Heart right ventricle (tissue), 16 donors: ENCODE measurements at regions of chr6 and their contacts with region 1.

Region 1: GRCh38 chr6:4606821-4607704 is 169.1 kb upstream of the CDYL start:
- DNase-seq: peak in 1 of 2 donors; percentile 29
- ATAC-seq: peak in 3 of 8 donors; percentile 12 to 59 (median 22)
- H3K4me3 ChIP-seq: no peak overlapping the region
- H3K27ac ChIP-seq: no peak overlapping the region
- H3K4me1 ChIP-seq: peaks cover 0 to 42% (median 23%) of the 10 kb centered on the region in 9 donors
- H3K27me3 ChIP-seq: no peaks in the 10 kb centered on the region
- CTCF ChIP-seq: no peak

Region 2: DNA sequence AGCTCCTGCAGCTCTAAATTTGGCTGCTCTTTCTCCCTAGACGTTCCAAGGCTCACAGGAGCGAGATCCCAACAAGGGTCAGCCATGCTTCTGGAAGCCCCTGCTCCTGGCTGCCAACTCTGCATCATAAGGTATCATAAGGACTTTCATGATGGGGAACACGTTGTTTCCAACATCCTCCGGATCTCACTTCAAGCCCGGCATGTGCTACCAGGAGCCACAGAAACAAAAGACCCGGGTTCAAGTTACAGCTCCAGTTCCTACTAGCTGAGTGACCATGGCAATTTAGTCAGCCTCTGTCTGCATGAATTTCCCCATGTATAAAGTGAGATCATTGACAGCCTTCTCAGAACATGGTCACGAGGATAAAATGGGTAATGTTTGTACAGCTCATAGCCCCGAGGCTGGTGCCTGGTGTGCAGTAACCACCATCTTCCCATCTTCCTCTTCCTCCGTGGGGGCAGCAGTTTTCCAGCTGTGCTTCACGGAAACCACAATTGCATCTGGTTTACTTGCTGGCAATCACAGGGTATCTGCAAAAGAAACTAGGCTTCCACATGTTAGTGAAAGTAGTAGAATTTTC is 262.7 kb before region 1 on chr6:
- intact Hi-C with region 1: loop called in 1 of 10 experiments (anchors 10 kb)
- DNase-seq: no peak
- ATAC-seq: peak in 1 of 8 donors; percentile 28
- H3K4me3 ChIP-seq: peak overlapping the region in 6 of 10 donors; percentile 31 to 57 (median 54)
- H3K27ac ChIP-seq: peak overlapping the region in 4 of 10 donors; percentile 76 to 90 (median 86)
- H3K4me1 ChIP-seq: peaks cover 0 to 37% (median 8%) of the 10 kb centered on the region in 9 donors
- H3K27me3 ChIP-seq: no peaks in the 10 kb centered on the region
- CTCF ChIP-seq: no peak

Region 3: GRCh38 chr6:4460586-4461475 is 146.2 kb before region 1 on chr6:
- intact Hi-C with region 1: loop called in 1 of 10 experiments (anchors 10 kb)
- DNase-seq: peak; percentile 39 to 67
- ATAC-seq: peak; percentile 82 to 95 (median 92)
- H3K4me3 ChIP-seq: peak overlapping the region in 2 of 10 donors; percentile 9 to 14
- H3K27ac ChIP-seq: peak overlapping the region; percentile 33 to 77 (median 67)
- H3K4me1 ChIP-seq: peaks cover 5 to 23% (median 19%) of the 10 kb centered on the region in 9 donors
- H3K27me3 ChIP-seq: no peaks in the 10 kb centered on the region
- CTCF ChIP-seq: no peak

Region 4: DNA sequence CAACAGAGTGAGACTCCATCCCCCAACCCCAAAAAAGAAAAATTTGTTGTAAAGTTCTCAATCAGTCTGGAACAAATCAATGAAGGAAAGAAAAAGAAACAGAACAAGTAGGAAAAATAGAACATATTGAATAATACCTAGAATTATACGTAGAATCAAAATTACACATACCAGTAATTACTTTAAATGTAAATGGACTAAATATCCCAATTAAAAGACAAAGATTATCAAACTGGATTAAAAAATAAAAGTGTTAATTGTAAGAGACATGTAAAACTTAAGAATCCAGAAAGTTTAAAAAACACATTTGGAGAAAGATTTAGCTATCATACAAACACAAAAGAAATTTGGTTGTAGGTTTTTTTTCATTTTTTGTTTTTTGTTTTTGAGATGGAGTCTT is 156.9 kb after region 1 on chr6:
- intact Hi-C with region 1: no loop called
- DNase-seq: no peak
- ATAC-seq: no peak
- H3K4me3 ChIP-seq: no peak overlapping the region
- H3K27ac ChIP-seq: no peak overlapping the region
- H3K4me1 ChIP-seq: no peaks in the 10 kb centered on the region
- H3K27me3 ChIP-seq: no peaks in the 10 kb centered on the region
- CTCF ChIP-seq: no peak